Ovary (tissue), 10 donors: ENCODE measurements at regions of chr9 and their contacts with region 1.

Region 1: GRCh38 chr9:113401027-113401792 is at the start of gene ALAD:
- DNase-seq: peak; percentile 99 to 100 (median 100)
- H3K4me3 ChIP-seq: peak within 1 kb of the TSS; percentile 71
- H3K27ac ChIP-seq: peak within 1 kb of the TSS; percentile 17 to 29
- H3K4me1 ChIP-seq: peaks cover 6% of the 10 kb centered on the region
- H3K27me3 ChIP-seq: no peaks in the 10 kb centered on the region
- CTCF ChIP-seq: peak; percentile 92 to 97 (median 96)
- EP300 ChIP-seq: no peak
- POLR2A ChIP-seq: no peak
- total RNA-seq, gene ALAD: 14.3 to 59.3 (median 34.7) TPM

Region 2: DNA sequence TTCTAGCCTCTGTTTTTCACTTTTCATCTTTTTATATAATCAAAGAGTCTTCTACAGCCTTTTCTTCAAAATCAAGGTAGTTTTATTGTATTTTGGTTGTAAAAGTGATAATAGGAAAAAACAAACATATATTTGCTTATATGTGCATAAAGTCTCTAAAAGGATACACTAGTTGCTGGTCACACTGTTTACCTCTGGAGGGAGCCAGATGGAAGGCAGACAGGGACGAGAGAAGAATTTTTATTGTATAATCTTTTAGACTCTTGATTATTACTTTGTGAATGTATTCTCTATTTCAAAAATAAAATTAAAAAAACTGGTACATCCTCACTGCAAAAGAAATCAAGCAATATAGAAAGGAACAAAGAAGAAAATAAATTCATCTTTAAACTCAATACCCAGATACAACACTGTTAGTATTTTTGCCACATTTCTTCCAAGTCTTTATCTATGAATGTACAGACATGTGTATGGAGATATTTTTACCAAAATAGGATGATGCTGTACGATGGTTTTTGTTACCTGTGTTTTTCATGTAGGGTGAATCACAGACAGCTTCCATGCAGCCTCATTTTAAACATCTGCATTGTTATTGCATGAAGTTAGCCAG is 91.9 kb before region 1 on chr9:
- intact Hi-C with region 1: loop called in 1 of 4 experiments (anchors 10 kb)
- DNase-seq: no peak
- H3K4me3 ChIP-seq: no peak overlapping the region
- H3K27ac ChIP-seq: no peak overlapping the region
- H3K4me1 ChIP-seq: no peaks in the 10 kb centered on the region
- H3K27me3 ChIP-seq: no peaks in the 10 kb centered on the region
- CTCF ChIP-seq: peak in 2 of 3 donors; percentile 18 to 42
- EP300 ChIP-seq: no peak
- POLR2A ChIP-seq: no peak